Psoas muscle (tissue), 8 donors: ENCODE measurements at regions of chr6 and their contacts with region 1.

Region 1: GRCh38 chr6:15441215-15441868 is 195.5 kb downstream of the JARID2 start:
- DNase-seq: no peak
- ATAC-seq: peak; percentile 57 to 69 (median 66)
- H3K4me3 ChIP-seq: no peak overlapping the region
- H3K27ac ChIP-seq: peak overlapping the region; percentile 63
- H3K4me1 ChIP-seq: peaks cover 80% of the 10 kb centered on the region
- H3K27me3 ChIP-seq: no peaks in the 10 kb centered on the region
- CTCF ChIP-seq: peak; percentile 73

Region 2: DNA sequence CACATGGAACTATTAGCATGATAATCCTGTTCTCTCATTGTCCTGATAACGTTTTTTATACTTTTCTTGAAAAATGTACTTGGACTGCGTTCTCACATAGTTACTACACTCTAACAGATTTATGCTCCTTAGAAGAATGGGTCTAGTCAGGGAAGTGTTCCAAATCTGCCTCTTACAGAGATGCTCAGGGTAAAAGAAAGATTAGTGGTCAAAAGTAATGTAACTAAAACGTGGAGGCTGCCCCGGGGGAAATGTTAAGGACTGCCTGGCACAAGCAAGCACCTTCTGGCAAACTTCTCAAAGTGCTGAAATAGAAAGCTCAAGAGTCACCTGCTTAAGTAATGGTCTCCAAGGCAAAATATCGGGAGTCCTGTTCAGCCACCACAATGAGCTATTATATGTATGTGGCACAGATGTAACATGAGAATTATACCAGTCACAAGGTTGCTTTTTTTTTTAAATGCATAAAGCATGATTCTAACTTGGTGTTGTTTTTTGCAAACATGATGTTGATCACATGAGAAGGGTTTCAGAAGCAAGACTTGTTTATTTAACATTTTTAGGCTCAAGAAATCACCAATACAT is 439.9 kb before region 1 on chr6:
- intact Hi-C with region 1: no loop called
- DNase-seq: no peak
- ATAC-seq: no peak
- H3K4me3 ChIP-seq: no peak overlapping the region
- H3K27ac ChIP-seq: no peak overlapping the region
- H3K4me1 ChIP-seq: peaks cover 10% of the 10 kb centered on the region
- H3K27me3 ChIP-seq: no peaks in the 10 kb centered on the region
- CTCF ChIP-seq: no peak

Region 3: GRCh38 chr6:15171026-15171425 is 270.3 kb before region 1 on chr6:
- intact Hi-C with region 1: no loop called
- DNase-seq: no peak
- ATAC-seq: no peak
- H3K4me3 ChIP-seq: no peak overlapping the region
- H3K27ac ChIP-seq: no peak overlapping the region
- H3K4me1 ChIP-seq: no peaks in the 10 kb centered on the region
- H3K27me3 ChIP-seq: no peaks in the 10 kb centered on the region
- CTCF ChIP-seq: no peak

Region 4: GRCh38 chr6:15264902-15265761 is 176.2 kb before region 1 on chr6:
- intact Hi-C with region 1: loop called in 1 of 2 experiments (anchors 5 kb)
- DNase-seq: peak in 1 of 2 donors; percentile 64
- ATAC-seq: peak; percentile 65 to 75 (median 70)
- H3K4me3 ChIP-seq: peak overlapping the region; percentile 8
- H3K27ac ChIP-seq: peak overlapping the region; percentile 81
- H3K4me1 ChIP-seq: peaks cover 48% of the 10 kb centered on the region
- H3K27me3 ChIP-seq: no peaks in the 10 kb centered on the region
- CTCF ChIP-seq: no peak

Region 5: GRCh38 chr6:15399641-15400470 is 41.5 kb before region 1 on chr6:
- intact Hi-C with region 1: loop called in 1 of 2 experiments (anchors 5 kb)
- DNase-seq: peak; percentile 72 to 85
- ATAC-seq: peak; percentile 76 to 81 (median 77)
- H3K4me3 ChIP-seq: peak overlapping the region; percentile 66
- H3K27ac ChIP-seq: peak overlapping the region; percentile 89
- H3K4me1 ChIP-seq: peaks cover 72% of the 10 kb centered on the region
- H3K27me3 ChIP-seq: no peaks in the 10 kb centered on the region
- CTCF ChIP-seq: no peak

Region 6: DNA sequence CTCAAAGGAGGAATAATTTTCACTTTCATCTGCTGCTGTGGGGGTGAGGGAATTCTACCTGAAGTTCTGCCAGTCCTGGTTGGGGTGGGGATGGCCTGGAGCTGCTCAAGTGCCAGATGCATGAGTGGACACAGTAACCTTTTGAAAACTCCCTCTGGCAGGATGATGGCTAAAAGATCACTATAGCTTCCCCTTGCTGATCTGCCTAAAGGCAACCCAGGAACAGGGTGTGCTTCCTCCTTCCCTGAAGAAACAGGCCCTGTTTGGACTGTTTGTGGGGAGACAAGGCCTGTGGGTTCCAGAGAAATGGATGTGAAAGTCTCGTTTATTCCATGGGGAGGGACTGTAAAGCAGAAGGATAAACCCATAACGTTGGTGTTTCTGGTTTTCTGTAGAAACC is 44.6 kb after region 1 on chr6:
- intact Hi-C with region 1: loop called in 1 of 2 experiments (anchors 5 kb)
- DNase-seq: no peak
- ATAC-seq: no peak
- H3K4me3 ChIP-seq: no peak overlapping the region
- H3K27ac ChIP-seq: no peak overlapping the region
- H3K4me1 ChIP-seq: peaks cover 34% of the 10 kb centered on the region
- H3K27me3 ChIP-seq: no peaks in the 10 kb centered on the region
- CTCF ChIP-seq: no peak